Posterior cingulate gyrus (tissue), 11 donors: ENCODE measurements at regions of chr9 and their contacts with region 1.

Region 1: GRCh38 chr9:83334320-83334719 is 203.9 kb downstream of the FRMD3 start:
- DNase-seq: peak; percentile 53 to 96 (median 82)

Region 2: DNA sequence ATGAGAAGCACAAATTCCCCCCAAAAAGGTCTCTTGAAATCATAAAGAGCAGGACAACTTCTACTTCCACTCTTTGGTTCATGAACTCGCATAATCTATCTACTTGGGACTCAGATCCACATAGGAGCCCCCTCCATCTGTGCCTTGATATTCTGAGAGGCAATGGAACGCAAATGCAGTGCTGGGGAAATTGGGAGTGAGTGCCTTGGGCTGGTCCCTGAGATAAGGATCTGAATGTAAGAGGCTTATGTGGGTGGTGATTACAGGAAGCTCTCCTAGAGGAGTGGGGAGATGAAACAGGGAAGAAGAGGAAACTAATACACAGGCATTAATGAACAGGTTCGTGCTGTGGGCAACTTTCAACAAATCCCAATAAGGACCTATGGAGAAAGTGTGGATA is 557.0 kb before region 1 on chr9:
- intact Hi-C with region 1: no loop called
- DNase-seq: no peak

Region 3: DNA sequence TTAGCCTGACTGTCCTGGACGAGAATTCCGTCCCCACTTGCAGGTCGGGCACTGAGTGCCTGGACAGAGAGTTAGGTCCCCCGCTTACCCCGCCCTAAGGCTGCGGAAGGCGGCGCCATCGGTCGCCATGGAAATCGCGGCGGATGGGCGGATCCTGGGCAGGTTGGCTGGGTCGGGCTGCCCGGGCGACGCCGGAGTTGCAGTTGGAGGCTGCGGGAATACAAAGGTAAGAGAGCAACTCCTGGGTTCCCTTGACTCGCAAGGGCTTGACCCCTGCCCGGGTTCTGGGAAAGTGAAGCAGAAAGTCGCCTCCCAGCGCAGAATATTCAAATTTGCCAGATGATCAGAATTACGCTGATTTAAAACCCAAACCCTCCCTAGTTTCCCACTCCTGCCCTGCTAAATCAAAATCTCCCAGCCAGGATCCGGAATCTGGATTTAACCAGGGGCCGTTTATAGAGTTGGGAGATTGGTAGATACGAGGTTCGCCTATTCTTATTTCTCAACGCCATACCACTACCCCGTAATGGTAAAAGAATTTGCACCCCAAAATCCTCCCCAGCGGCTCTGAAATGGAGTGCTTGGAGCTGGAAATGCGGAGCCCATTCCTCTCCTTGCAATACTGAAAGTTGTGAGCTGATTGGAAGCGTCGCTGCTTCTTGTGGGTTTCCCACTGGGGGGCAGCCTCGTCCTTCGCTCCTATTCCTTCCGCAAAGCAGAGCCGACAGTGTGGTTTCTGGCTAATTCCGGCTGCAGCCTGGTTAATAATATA is 115.0 kb before region 1 on chr9:
- intact Hi-C with region 1: loop called (anchors 10 kb)
- DNase-seq: peak; percentile 42 to 96 (median 74)

Region 4: GRCh38 chr9:83544002-83544698 is 209.8 kb after region 1 on chr9:
- intact Hi-C with region 1: loop called (anchors 5 kb)
- DNase-seq: no peak

Region 5: DNA sequence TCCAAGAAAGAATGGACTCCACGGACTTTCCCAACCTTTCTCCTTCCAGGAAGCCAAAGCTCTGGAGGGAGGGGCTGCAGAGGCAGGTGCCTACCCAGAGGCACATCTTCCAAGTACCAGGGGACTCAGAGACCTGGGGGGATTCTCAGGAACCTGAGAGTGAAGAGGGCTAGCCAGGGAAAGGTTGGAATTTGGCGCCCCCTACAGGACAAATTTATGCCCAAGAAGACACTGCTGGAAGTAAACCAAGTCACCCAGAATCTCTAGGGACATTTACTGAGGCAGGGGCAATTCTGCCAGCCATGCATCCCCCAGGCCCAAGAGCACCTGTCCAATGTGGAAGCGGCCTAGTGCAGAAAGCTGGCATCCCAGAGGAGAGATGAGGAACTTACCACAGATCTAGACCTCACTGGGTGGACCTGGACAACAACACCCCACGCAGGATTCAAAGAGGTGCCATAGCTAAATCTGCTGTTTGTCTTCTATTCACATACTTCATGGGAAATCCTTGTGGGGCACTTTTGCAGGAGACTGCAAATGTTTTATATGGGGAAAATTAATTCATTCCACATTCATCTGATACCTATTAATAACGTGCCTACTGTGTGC is 262.7 kb after region 1 on chr9:
- intact Hi-C with region 1: loop called (anchors 1 kb)
- DNase-seq: peak in 4 of 10 donors; percentile 26 to 87 (median 50)

Region 6: GRCh38 chr9:83622939-83623678 is 288.8 kb after region 1 on chr9 and contains the start of gene IDNK:
- intact Hi-C with region 1: loop called (anchors 10 kb)
- DNase-seq: peak; percentile 36 to 93 (median 50)